PC-9 (cell line): ENCODE measurements at regions of chr11 and their contacts with region 1.

Region 1: GRCh38 chr11:61041755-61042518 is 60.4 kb upstream of the CD5 start:
- DNase-seq: peak in 1 of 2 experiments; percentile 50
- H3K4me3 ChIP-seq: no peak overlapping the region
- H3K27ac ChIP-seq: no peak overlapping the region
- H3K4me1 ChIP-seq: no peaks in the 10 kb centered on the region
- H3K27me3 ChIP-seq: no peaks in the 10 kb centered on the region
- CTCF ChIP-seq: no peak

Region 2: DNA sequence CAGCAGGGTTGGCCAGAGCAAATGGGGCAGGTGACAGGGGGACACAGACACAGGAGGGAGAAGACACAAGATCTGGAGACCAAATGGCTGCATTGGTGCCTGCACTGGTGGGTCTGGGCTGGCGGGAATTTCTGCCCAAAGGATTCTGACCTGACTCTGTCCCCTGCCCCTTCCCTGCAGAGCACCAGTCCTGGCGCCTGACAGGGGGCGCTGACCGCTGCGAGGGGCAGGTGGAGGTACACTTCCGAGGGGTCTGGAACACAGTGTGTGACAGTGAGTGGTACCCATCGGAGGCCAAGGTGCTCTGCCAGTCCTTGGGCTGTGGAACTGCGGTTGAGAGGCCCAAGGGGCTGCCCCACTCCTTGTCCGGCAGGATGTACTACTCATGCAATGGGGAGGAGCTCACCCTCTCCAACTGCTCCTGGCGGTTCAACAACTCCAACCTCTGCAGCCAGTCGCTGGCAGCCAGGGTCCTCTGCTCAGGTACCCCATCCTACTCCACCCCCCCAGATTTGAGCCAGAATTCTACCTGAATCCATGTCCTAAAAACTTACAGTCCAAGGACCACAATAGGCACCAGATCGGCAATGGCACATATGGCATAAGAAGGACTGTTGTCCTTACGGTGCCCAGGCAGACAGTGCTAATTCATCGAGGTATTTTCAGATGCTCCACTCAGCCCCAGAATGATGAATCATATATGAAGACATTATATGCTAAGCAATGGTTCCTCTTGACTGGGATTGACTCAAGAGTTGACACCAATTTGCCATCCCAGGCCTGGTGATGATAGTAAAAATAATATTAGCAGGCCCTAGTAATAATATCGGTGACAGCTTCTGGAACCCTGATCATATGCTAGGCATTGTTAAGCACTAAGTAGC is 32.3 kb before region 1 on chr11:
- CTCF ChIA-PET with region 1: no interaction called
- POLR2A ChIA-PET with region 1: interaction called, 10 read pairs
- intact Hi-C with region 1: no loop called
- DNase-seq: no peak
- H3K4me3 ChIP-seq: no peak overlapping the region
- H3K27ac ChIP-seq: no peak overlapping the region
- H3K4me1 ChIP-seq: no peaks in the 10 kb centered on the region
- H3K27me3 ChIP-seq: peaks cover 43% of the 10 kb centered on the region
- CTCF ChIP-seq: no peak